CD4-positive, alpha-beta memory T cell (primary cell): ENCODE measurements at regions of chr4 and their contacts with region 1.

Region 1: DNA sequence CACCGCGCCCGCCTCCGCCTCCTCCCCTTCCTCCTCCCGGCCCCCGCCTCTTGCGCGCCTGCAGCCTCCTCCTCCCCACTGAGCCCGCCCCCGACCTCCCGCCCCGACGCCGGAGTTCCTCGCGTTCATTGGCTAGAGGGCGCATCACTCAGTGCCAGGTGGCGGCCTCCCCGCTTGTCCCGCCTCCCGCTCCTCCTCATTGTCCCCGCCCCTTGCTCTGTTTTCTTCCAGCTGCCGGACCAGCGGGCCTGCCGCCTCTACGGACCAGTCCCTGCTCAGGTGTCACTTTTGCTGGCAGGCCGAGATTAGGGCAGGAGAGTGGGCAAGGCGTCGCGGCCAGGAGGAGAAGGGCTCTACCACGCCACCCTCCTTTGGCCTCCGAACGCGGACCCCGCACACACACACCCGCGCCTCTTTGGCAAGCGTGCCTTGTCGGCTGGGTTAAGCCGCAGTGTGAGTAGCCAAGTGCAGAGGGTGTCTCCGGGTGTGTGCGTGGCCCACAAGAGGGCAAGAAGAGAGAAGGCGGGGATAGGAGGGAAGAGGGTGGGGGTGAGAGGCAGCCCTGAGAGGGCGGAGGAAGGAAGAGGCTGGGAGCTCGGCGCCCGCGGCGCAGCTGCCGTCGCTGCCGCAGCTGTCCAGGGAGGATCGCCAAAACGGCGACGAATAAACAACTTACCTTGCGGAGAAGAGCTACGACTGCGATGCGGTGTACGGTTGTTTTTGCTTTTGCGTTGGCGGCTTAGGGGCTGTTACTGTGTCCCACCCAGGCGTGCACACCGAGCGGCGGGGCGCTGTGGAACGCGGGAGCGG is 436 bp upstream of the PPP3CA start:
- DNase-seq: peak; percentile 97 to 99 (median 98)
- H3K4me3 ChIP-seq: peak overlapping the region; percentile 96 to 99
- H3K4me3 Mint-ChIP-seq: peak overlapping the region; percentile 93 to 99 (median 97)
- H3K27ac ChIP-seq: peak overlapping the region; percentile 81
- H3K27ac Mint-ChIP-seq: peak overlapping the region; percentile 95 to 98 (median 96)
- H3K4me1 ChIP-seq: peaks cover 33% of the 10 kb centered on the region
- H3K4me1 Mint-ChIP-seq: peaks cover 24 to 39% (median 34%) of the 10 kb centered on the region in 4 donors
- H3K27me3 ChIP-seq: no peaks in the 10 kb centered on the region
- H3K27me3 Mint-ChIP-seq: peaks cover 0 to 5% of the 10 kb centered on the region in 2 donors

Region 2: GRCh38 chr4:99504804-99505569 is 1842.8 kb before region 1 on chr4:
- CTCF ChIA-PET with region 1: no interaction called
- POLR2A ChIA-PET with region 1: no interaction called
- intact Hi-C with region 1: loop called (anchors 5 kb)
- DNase-seq: peak in 1 of 5 donors; percentile 22
- H3K4me3 ChIP-seq: no peak overlapping the region
- H3K4me3 Mint-ChIP-seq: peak overlapping the region in 1 of 8 donors; percentile 47
- H3K27ac ChIP-seq: no peak overlapping the region
- H3K27ac Mint-ChIP-seq: peak overlapping the region in 3 of 7 donors; percentile 19 to 56 (median 40)
- H3K4me1 ChIP-seq: peaks cover 41% of the 10 kb centered on the region
- H3K4me1 Mint-ChIP-seq: peaks cover 22 to 53% (median 35%) of the 10 kb centered on the region in 4 donors
- H3K27me3 ChIP-seq: no peaks in the 10 kb centered on the region
- H3K27me3 Mint-ChIP-seq: no peaks in the 10 kb centered on the region

Region 3: GRCh38 chr4:100907465-100908454 is 440.0 kb before region 1 on chr4:
- CTCF ChIA-PET with region 1: no interaction called
- POLR2A ChIA-PET with region 1: no interaction called
- intact Hi-C with region 1: loop called (anchors 1 kb)
- DNase-seq: no peak
- H3K4me3 ChIP-seq: no peak overlapping the region
- H3K4me3 Mint-ChIP-seq: peak overlapping the region in 1 of 8 donors; percentile 21
- H3K27ac ChIP-seq: no peak overlapping the region
- H3K27ac Mint-ChIP-seq: peak overlapping the region in 2 of 7 donors; percentile 25 to 44
- H3K4me1 ChIP-seq: no peaks in the 10 kb centered on the region
- H3K4me1 Mint-ChIP-seq: peaks cover 0 to 3% (median 0%) of the 10 kb centered on the region in 4 donors
- H3K27me3 ChIP-seq: no peaks in the 10 kb centered on the region
- H3K27me3 Mint-ChIP-seq: no peaks in the 10 kb centered on the region

Region 4: DNA sequence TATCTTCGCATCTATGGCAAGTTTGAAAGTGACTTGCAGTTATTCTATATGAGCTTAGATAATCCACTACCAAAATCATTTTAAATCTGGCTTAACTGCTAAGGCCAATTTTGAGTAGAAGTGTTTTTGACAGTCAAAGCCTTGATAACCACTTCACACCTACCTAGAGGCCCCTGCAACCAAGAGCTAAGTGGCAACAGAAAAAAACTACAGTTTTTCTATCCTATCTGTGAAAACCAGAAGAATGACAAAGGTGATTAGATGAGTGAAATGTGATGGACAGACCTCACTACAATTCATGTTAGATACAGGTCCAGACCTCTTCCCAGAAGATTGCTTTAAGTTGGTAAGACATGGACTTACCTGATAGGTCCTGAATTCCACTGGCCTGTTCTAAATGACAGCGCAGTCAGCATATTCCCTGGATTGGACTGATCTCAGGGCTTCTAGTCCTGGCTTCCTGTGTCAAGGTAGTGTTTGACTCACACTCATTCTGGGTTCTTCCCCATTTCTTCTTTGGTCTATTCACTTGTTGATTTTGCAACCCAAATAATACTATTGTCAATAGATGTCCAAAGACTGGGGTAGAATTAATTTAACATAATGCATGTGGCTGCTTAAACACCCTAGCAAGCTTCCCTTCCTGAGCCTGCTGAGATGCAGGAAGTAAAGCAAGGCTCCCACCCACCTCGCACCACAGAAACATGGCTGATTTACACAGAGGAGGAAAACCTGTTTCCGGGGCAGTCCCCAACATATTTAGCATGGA is 65.5 kb before region 1 on chr4:
- CTCF ChIA-PET with region 1: interaction called, 3 read pairs
- POLR2A ChIA-PET with region 1: interaction called, 21 read pairs
- intact Hi-C with region 1: no loop called
- DNase-seq: peak in 4 of 5 donors; percentile 18 to 52 (median 30)
- H3K4me3 ChIP-seq: no peak overlapping the region
- H3K4me3 Mint-ChIP-seq: peak overlapping the region in 7 of 8 donors; percentile 10 to 82 (median 51)
- H3K27ac ChIP-seq: no peak overlapping the region
- H3K27ac Mint-ChIP-seq: peak overlapping the region; percentile 9 to 71 (median 51)
- H3K4me1 ChIP-seq: peaks cover 54% of the 10 kb centered on the region
- H3K4me1 Mint-ChIP-seq: peaks cover 47 to 89% (median 68%) of the 10 kb centered on the region in 4 donors
- H3K27me3 ChIP-seq: no peaks in the 10 kb centered on the region
- H3K27me3 Mint-ChIP-seq: no peaks in the 10 kb centered on the region

Region 5: DNA sequence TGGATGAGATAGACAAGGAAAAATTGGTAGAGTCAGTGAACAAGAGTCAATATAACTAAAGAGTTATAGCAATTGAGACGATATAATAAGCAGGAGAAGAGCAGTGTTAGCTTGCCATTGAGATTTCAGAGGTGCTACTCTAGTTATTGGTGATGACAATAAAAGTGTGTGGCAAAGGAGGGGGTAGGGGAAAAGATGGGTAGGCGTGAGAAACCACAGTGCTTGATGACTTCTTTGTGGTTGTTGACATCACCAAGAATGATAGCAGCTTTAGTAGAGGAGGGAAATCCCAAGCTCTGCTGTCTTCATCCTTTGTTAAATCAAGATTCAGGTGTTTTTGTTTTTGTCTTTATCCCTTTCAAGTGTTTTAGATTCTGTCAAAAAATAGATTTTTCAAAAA is 179.4 kb after region 1 on chr4:
- CTCF ChIA-PET with region 1: no interaction called
- POLR2A ChIA-PET with region 1: interaction called, 6 read pairs
- intact Hi-C with region 1: loop called (anchors 2 kb)
- DNase-seq: peak; percentile 77 to 86 (median 80)
- H3K4me3 ChIP-seq: no peak overlapping the region
- H3K4me3 Mint-ChIP-seq: peak overlapping the region in 4 of 8 donors; percentile 2 to 52 (median 4)
- H3K27ac ChIP-seq: no peak overlapping the region
- H3K27ac Mint-ChIP-seq: peak overlapping the region; percentile 4 to 91 (median 49)
- H3K4me1 ChIP-seq: peaks cover 17% of the 10 kb centered on the region
- H3K4me1 Mint-ChIP-seq: peaks cover 10 to 21% (median 10%) of the 10 kb centered on the region in 4 donors
- H3K27me3 ChIP-seq: no peaks in the 10 kb centered on the region
- H3K27me3 Mint-ChIP-seq: peaks cover 2 to 3% of the 10 kb centered on the region in 2 donors

Region 6: GRCh38 chr4:102826890-102827673 is 1479.3 kb after region 1 on chr4 and contains the start of gene UBE2D3:
- CTCF ChIA-PET with region 1: no interaction called
- POLR2A ChIA-PET with region 1: interaction called, 11 read pairs
- intact Hi-C with region 1: loop called (anchors 2 kb)
- DNase-seq: peak; percentile 95 to 97 (median 96)
- H3K4me3 ChIP-seq: peak within 1 kb of the TSS; percentile 96 to 97
- H3K4me3 Mint-ChIP-seq: no peak within 1 kb of the TSS
- H3K27ac ChIP-seq: peak within 1 kb of the TSS; percentile 100
- H3K27ac Mint-ChIP-seq: no peak within 1 kb of the TSS
- H3K4me1 ChIP-seq: peaks cover 43% of the 10 kb centered on the region
- H3K4me1 Mint-ChIP-seq: peaks cover 25 to 42% (median 29%) of the 10 kb centered on the region in 4 donors
- H3K27me3 ChIP-seq: no peaks in the 10 kb centered on the region
- H3K27me3 Mint-ChIP-seq: peaks cover 0 to 2% of the 10 kb centered on the region in 2 donors
- total RNA-seq, gene UBE2D3: 337 to 339 TPM